Heart right ventricle (tissue), 16 donors: ENCODE measurements at regions of chr10 and their contacts with region 1.

Region 1: GRCh38 chr10:80444646-80445319 is 9.3 kb upstream of the TSPAN14 start:
- DNase-seq: peak; percentile 57 to 78
- ATAC-seq: peak; percentile 90 to 97 (median 93)
- H3K4me3 ChIP-seq: no peak overlapping the region
- H3K27ac ChIP-seq: peak overlapping the region in 3 of 10 donors; percentile 21 to 51 (median 51)
- H3K4me1 ChIP-seq: peaks cover 0 to 37% (median 14%) of the 10 kb centered on the region in 9 donors
- H3K27me3 ChIP-seq: no peaks in the 10 kb centered on the region
- CTCF ChIP-seq: peak; percentile 63 to 94 (median 76)

Region 2: GRCh38 chr10:80389809-80390208 is 55.0 kb before region 1 on chr10:
- intact Hi-C with region 1: loop called in 5 of 10 experiments (anchors 2 to 10 kb)
- DNase-seq: no peak
- ATAC-seq: no peak
- H3K4me3 ChIP-seq: no peak overlapping the region
- H3K27ac ChIP-seq: peak overlapping the region in 3 of 10 donors; percentile 60 to 79 (median 70)
- H3K4me1 ChIP-seq: peaks cover 0 to 33% (median 13%) of the 10 kb centered on the region in 9 donors
- H3K27me3 ChIP-seq: no peaks in the 10 kb centered on the region
- CTCF ChIP-seq: no peak

Region 3: DNA sequence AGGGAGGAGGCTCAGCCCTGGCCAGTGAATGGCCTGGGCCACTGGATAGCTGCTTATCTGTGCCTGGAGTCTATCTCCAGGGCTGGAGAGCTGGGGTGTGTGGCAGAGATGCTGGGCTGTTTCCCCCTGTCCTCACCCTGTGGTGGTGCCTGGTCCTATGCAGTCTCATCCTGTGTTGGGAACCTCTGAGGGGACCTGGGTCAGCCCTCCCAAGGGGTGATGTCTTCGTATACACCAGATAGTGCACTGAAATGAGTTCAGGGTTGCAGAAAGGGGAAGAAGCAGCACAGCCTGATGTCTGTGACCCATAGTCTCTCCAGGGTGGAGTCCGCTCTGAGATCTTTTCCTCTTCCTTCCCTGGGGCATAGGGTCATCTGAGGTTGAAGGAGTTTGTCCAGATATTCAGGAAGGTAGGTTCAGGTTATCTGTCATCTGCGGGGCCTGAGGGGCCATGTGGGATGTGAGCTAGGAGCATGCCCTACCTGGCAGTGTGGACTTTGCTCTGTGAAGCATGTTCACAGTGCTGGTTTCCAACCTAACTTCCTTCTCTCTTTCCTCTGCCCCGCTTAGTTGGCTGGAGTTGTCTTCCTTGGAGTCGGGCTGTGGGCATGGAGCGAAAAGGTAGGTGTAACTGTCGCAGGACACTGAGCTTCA is 59.5 kb after region 1 on chr10:
- intact Hi-C with region 1: loop called (anchors 1 to 5 kb)
- DNase-seq: no peak
- ATAC-seq: peak in 6 of 8 donors; percentile 5 to 29 (median 18)
- H3K4me3 ChIP-seq: peak overlapping the region in 1 of 10 donors; percentile 1
- H3K27ac ChIP-seq: peak overlapping the region; percentile 6 to 92 (median 79)
- H3K4me1 ChIP-seq: peaks cover 46 to 100% (median 98%) of the 10 kb centered on the region in 9 donors
- H3K27me3 ChIP-seq: no peaks in the 10 kb centered on the region
- CTCF ChIP-seq: no peak

Region 4: DNA sequence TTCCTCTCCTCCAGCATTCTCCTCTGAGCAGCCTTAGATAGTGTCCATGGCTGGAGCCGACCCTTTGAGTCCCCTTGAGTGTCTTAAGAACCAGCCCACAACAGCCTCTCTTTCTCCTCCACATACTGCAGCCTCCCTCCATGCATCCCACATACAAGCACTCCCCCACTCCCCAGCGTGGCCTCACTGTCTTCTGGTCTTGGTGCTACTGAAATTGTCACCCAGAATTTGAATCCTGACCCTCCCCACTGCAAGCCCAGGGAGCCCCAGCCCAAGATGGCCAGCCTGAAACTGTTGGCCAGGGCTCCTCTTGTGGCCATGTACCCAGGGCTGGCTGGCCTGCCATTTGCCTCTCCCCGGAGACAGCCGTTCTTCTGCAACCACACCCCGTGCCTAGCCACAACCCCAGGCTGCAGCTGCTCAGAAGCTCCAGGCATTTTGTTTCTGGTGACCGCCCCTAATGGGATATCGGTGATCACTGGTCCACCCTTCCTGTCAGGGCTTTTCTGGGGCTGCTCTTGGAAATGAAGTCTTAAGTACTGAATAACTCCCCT is 74.1 kb after region 1 on chr10:
- intact Hi-C with region 1: no loop called
- DNase-seq: peak in 1 of 2 donors; percentile 41
- ATAC-seq: peak; percentile 32 to 76 (median 62)
- H3K4me3 ChIP-seq: no peak overlapping the region
- H3K27ac ChIP-seq: peak overlapping the region in 9 of 10 donors; percentile 41 to 79 (median 63)
- H3K4me1 ChIP-seq: peaks cover 6 to 57% (median 29%) of the 10 kb centered on the region in 9 donors
- H3K27me3 ChIP-seq: no peaks in the 10 kb centered on the region
- CTCF ChIP-seq: no peak

Region 5: GRCh38 chr10:80530251-80530650 is 85.5 kb after region 1 on chr10:
- intact Hi-C with region 1: loop called in 1 of 10 experiments (anchors 1 kb)
- DNase-seq: peak in 1 of 2 donors; percentile 36
- ATAC-seq: peak; percentile 52 to 83 (median 70)
- H3K4me3 ChIP-seq: no peak overlapping the region
- H3K27ac ChIP-seq: peak overlapping the region in 9 of 10 donors; percentile 14 to 84 (median 68)
- H3K4me1 ChIP-seq: peaks cover 0 to 61% (median 24%) of the 10 kb centered on the region in 9 donors
- H3K27me3 ChIP-seq: no peaks in the 10 kb centered on the region
- CTCF ChIP-seq: peak in 7 of 9 donors; percentile 29 to 50 (median 35)

Region 6: DNA sequence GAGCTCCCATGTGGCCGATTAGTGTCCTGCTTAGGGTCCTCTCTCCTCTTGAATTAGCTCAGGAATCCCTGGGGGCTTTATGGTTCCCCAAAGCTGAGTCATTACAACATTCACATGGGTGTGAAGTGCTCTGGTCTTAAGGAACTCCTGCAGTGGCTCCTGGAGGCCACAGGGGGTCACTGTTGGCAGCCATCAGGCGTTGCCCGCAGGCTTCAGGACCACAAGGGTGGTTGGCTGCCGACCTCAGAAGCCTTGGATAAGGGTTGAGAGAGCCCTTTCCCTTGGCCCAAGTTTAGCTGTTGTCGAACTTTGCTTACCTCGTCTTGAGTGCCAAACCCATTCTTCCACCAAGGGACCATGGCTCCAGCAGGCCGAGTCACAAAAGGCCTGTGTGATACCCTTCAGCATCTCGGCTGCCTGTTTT is 154.7 kb after region 1 on chr10:
- intact Hi-C with region 1: loop called in 1 of 10 experiments (anchors 5 kb)
- DNase-seq: peak; percentile 12 to 47
- ATAC-seq: peak in 7 of 8 donors; percentile 47 to 84 (median 72)
- H3K4me3 ChIP-seq: no peak overlapping the region
- H3K27ac ChIP-seq: peak overlapping the region in 1 of 10 donors; percentile 1
- H3K4me1 ChIP-seq: peaks cover 0 to 25% (median 0%) of the 10 kb centered on the region in 9 donors
- H3K27me3 ChIP-seq: no peaks in the 10 kb centered on the region
- CTCF ChIP-seq: peak; percentile 43 to 88 (median 64)

Region 7: DNA sequence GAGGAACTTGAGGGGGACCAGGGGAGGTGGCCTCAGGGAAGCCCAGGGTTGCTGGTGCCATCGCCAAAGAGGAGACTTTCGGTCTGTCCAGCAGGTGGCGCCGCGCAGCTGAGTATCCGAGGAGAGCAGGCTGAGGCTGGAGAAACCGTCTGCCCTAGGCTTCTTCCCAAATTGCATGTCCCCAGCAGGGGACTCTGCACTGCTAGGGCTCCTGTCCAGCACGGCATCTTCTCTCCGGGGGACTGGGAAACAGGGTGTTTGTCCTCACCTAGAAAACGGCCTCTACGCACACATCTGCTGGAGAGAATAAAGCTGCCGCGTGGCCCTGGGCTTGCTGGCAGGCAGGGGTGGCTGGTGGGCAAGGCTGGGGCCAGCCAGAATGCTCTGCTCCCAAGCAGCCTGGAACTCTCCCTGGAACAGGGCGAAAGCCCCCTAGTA is 254.8 kb after region 1 on chr10:
- intact Hi-C with region 1: loop called in 1 of 10 experiments (anchors 10 kb)
- DNase-seq: peak; percentile 81 to 85
- ATAC-seq: peak; percentile 81 to 91 (median 88)
- H3K4me3 ChIP-seq: no peak overlapping the region
- H3K27ac ChIP-seq: no peak overlapping the region
- H3K4me1 ChIP-seq: peaks cover 0 to 14% (median 8%) of the 10 kb centered on the region in 9 donors
- H3K27me3 ChIP-seq: peaks cover 0 to 3% (median 0%) of the 10 kb centered on the region in 7 donors
- CTCF ChIP-seq: peak; percentile 63 to 89 (median 87)